HCT116 (cell line): ENCODE measurements at regions of chr7 and their contacts with region 1.

Region 1: DNA sequence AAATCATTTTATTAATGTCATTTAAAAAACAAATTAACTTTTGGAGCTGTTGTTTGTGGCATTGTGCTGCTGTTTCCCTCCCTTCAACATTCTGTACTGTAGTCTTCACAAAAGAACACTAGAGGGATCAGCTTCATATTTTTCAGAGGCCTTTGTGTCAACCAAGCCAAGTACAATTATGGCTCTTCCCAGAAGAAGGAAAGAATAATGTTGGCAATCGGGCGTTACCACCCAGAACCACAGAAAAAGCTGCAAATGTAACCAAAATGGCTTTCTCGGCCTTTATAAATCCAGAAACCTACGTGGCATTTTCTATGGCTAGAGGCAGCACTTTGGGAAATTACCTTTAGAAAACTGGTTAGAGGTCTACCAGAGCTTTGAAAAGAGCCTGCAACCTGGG is 98.8 kb upstream of the COL1A2 start:
- DNase-seq: no peak
- ATAC-seq: peak; percentile 68
- H3K4me3 ChIP-seq: no peak overlapping the region
- H3K27ac ChIP-seq: no peak overlapping the region
- H3K4me1 ChIP-seq: peaks cover 12 to 13% of the 10 kb centered on the region in 2 experiments
- H3K27me3 ChIP-seq: no peaks in the 10 kb centered on the region
- CTCF ChIP-seq: peak; percentile 26 to 45 (median 42); a peak in 4 of 6 replicates
- POLR2A ChIP-seq: no peak
- RAD21 ChIP-seq: peak; percentile 69

Region 2: GRCh38 chr7:94395141-94396036 is 99.5 kb after region 1 on chr7:
- CTCF ChIA-PET with region 1: interaction called, 89 read pairs
- POLR2A ChIA-PET with region 1: no interaction called
- RAD21 ChIA-PET with region 1: interaction called, 4 to 12 read pairs
- intact Hi-C with region 1: no loop called
- DNase-seq: peak; percentile 59
- ATAC-seq: peak; percentile 96
- H3K4me3 ChIP-seq: no peak overlapping the region
- H3K27ac ChIP-seq: no peak overlapping the region
- H3K4me1 ChIP-seq: no peaks in the 10 kb centered on the region
- H3K27me3 ChIP-seq: no peaks in the 10 kb centered on the region
- CTCF ChIP-seq: peak; percentile 64 to 81 (median 78)
- POLR2A ChIP-seq: no peak
- RAD21 ChIP-seq: peak; percentile 87

Region 3: GRCh38 chr7:94436018-94436604 is 140.3 kb after region 1 on chr7:
- CTCF ChIA-PET with region 1: interaction called, 11 read pairs
- POLR2A ChIA-PET with region 1: no interaction called
- RAD21 ChIA-PET with region 1: interaction called, 3 to 5 read pairs
- intact Hi-C with region 1: no loop called
- DNase-seq: peak; percentile 54
- ATAC-seq: peak; percentile 99
- H3K4me3 ChIP-seq: no peak overlapping the region
- H3K27ac ChIP-seq: no peak overlapping the region
- H3K4me1 ChIP-seq: 0 out of 4 replicates have a peak, but pooled peaks cover 0 to 3% of the 10 kb centered on the region in 2 experiments
- H3K27me3 ChIP-seq: no peaks in the 10 kb centered on the region
- CTCF ChIP-seq: peak; percentile 70 to 85 (median 78)
- POLR2A ChIP-seq: no peak
- RAD21 ChIP-seq: peak; percentile 70

Region 4: GRCh38 chr7:94657771-94658693 is 362.2 kb after region 1 on chr7:
- CTCF ChIA-PET with region 1: no interaction called
- POLR2A ChIA-PET with region 1: no interaction called
- RAD21 ChIA-PET with region 1: no interaction called
- intact Hi-C with region 1: loop called (anchors 10 kb)
- DNase-seq: peak; percentile 92
- ATAC-seq: peak; percentile 88
- H3K4me3 ChIP-seq: peak overlapping the region; percentile 46 to 56
- H3K27ac ChIP-seq: no peak overlapping the region
- H3K4me1 ChIP-seq: peaks cover 5 to 21% of the 10 kb centered on the region in 2 experiments; a peak in 2 of 4 replicates
- H3K27me3 ChIP-seq: no peaks in the 10 kb centered on the region
- CTCF ChIP-seq: no peak
- POLR2A ChIP-seq: no peak
- RAD21 ChIP-seq: no peak

Region 5: DNA sequence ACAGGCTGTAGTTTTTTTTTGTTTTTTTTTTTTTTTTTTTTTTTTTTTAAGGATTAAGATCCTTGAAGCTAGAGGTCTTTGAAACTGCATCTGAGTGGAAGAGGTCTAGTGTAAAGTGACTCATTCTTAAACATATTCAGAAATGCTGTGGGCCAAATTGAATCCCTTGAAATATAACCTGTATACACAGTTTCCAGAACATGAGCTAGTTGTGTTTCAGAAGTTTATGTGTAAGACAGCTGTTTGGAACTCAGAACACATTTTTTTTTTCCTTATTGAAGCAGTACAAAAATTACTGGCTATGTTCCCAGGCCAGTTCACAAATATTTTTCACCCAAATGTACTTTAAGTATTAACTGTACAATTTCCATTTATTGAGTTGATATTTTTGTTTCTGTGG is 679.5 kb after region 1 on chr7:
- CTCF ChIA-PET with region 1: no interaction called
- POLR2A ChIA-PET with region 1: no interaction called
- RAD21 ChIA-PET with region 1: no interaction called
- intact Hi-C with region 1: no loop called
- DNase-seq: no peak
- ATAC-seq: no peak
- H3K4me3 ChIP-seq: no peak overlapping the region
- H3K27ac ChIP-seq: no peak overlapping the region
- H3K4me1 ChIP-seq: no peaks in the 10 kb centered on the region
- H3K27me3 ChIP-seq: no peaks in the 10 kb centered on the region
- CTCF ChIP-seq: no peak
- POLR2A ChIP-seq: no peak
- RAD21 ChIP-seq: no peak

Region 6: DNA sequence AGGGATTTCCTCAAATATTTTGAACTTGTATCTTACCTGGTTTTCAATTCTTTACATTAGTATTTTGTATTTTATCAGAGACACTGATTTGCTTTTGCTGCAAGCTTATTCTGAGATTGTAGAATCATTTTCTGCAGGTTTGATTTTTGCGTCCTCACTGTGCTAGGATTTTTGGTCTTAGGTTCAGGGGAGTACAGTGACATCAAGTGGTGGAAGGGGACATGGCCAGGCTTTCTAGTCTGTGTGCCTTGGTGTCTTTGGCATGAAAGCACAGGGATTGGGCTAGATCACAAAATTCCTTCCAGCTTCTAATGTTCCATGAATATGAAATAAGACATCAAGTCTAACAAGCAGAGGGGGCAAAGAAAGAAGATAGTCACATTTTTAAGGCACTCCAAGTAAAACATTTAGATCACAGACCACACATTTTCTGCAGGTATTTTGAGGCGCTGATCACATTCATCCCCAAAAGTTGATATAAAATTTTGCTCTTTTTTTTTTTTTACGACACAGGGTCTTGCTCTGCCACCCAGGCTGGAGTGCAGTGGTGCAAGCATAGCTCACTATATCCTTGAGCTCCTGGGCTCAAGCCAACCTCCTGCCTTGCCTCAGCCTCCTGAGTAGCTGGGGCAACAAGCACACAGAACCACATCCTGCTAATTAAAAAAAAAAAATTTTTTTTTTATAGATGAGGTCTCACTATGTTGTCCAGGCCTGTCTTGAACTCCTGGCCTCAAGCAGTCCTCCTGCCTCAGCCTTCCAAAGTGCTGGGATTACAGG is 904.1 kb after region 1 on chr7:
- CTCF ChIA-PET with region 1: no interaction called
- POLR2A ChIA-PET with region 1: no interaction called
- RAD21 ChIA-PET with region 1: no interaction called
- intact Hi-C with region 1: loop called (anchors 5 kb)
- DNase-seq: peak; percentile 24
- ATAC-seq: peak; percentile 83
- H3K4me3 ChIP-seq: no peak overlapping the region
- H3K27ac ChIP-seq: no peak overlapping the region
- H3K4me1 ChIP-seq: no peaks in the 10 kb centered on the region
- H3K27me3 ChIP-seq: no peaks in the 10 kb centered on the region
- CTCF ChIP-seq: peak; percentile 48 to 76 (median 75); a peak in 5 of 6 replicates
- POLR2A ChIP-seq: no peak
- RAD21 ChIP-seq: peak; percentile 79

Region 7: GRCh38 chr7:95246831-95247370 is 951.1 kb after region 1 on chr7:
- CTCF ChIA-PET with region 1: interaction called, 7 read pairs
- POLR2A ChIA-PET with region 1: interaction called, 4 read pairs
- RAD21 ChIA-PET with region 1: no interaction called
- intact Hi-C with region 1: loop called (anchors 2 kb)
- DNase-seq: peak; percentile 54
- ATAC-seq: peak; percentile 86
- H3K4me3 ChIP-seq: no peak overlapping the region
- H3K27ac ChIP-seq: no peak overlapping the region
- H3K4me1 ChIP-seq: no peaks in the 10 kb centered on the region; a peak in 1 of 4 replicates
- H3K27me3 ChIP-seq: no peaks in the 10 kb centered on the region
- CTCF ChIP-seq: peak; percentile 44 to 77 (median 62); a peak in 5 of 6 replicates
- POLR2A ChIP-seq: no peak
- RAD21 ChIP-seq: peak; percentile 81

Region 8: DNA sequence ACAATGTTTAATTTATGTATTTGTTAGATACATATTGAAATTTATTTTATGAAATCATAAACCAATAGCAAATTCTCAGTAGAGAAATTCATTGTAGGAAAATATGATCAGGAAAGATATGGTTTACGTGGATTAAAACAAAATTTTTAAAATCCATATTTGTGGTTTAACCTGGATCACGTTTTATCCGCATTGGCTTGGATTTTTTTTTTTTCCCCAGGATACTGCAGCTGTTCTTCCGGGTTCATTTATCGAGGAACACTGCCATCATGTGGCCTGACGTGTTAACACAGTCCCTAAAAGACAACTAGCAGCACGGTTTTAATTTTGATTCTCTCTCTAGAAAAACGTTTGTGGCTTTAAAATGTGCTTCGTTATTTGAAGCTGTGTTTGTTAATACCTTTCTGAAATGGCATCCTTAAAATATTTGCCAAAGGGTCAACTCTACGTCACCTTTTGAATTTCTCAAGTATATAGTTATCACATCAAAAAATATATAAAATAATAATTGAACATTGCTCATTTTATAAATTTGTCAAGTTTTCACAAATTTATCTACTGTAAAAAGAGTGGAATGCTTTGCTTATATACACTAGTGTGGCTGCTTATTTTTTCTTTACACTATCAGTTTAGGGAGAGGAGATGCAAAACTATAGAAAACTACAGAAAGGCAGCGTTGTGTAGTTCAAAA is 1181.2 kb after region 1 on chr7:
- CTCF ChIA-PET with region 1: interaction called, 14 read pairs
- POLR2A ChIA-PET with region 1: no interaction called
- RAD21 ChIA-PET with region 1: no interaction called
- intact Hi-C with region 1: no loop called
- DNase-seq: peak; percentile 62
- ATAC-seq: peak; percentile 72
- H3K4me3 ChIP-seq: no peak overlapping the region
- H3K27ac ChIP-seq: no peak overlapping the region
- H3K4me1 ChIP-seq: peaks cover 0 to 6% of the 10 kb centered on the region in 2 experiments; a peak in 1 of 4 replicates
- H3K27me3 ChIP-seq: no peaks in the 10 kb centered on the region
- CTCF ChIP-seq: peak; percentile 58 to 80 (median 62); a peak in 5 of 6 replicates
- POLR2A ChIP-seq: no peak
- RAD21 ChIP-seq: peak; percentile 82